Psoas muscle (tissue), 8 donors: ENCODE measurements at regions of chr2 and their contacts with region 1.

Region 1: GRCh38 chr2:239934571-239935171 is 90.5 kb downstream of the NDUFA10 start:
- DNase-seq: peak; percentile 62 to 77
- ATAC-seq: peak; percentile 86 to 92 (median 86)
- H3K4me3 ChIP-seq: no peak overlapping the region
- H3K27ac ChIP-seq: no peak overlapping the region
- H3K4me1 ChIP-seq: no peaks in the 10 kb centered on the region
- H3K27me3 ChIP-seq: no peaks in the 10 kb centered on the region
- CTCF ChIP-seq: peak; percentile 77

Region 2: GRCh38 chr2:239675826-239676715 is 258.6 kb before region 1 on chr2:
- intact Hi-C with region 1: no loop called
- DNase-seq: no peak
- ATAC-seq: no peak
- H3K4me3 ChIP-seq: no peak overlapping the region
- H3K27ac ChIP-seq: no peak overlapping the region
- H3K4me1 ChIP-seq: no peaks in the 10 kb centered on the region
- H3K27me3 ChIP-seq: no peaks in the 10 kb centered on the region
- CTCF ChIP-seq: no peak

Region 3: DNA sequence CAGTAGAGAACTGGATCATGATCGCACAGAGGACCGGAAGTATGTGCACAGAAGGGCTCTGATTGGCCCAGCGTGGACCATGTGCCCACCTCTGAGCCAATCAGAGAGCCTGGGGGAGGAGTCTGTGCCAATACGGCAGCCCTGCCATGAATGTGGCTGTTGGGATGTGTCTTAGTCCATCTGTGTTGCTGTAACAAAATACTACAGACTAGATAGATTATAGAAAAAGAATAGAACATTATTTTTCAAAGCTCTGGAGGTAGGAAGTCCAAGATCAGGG is 41.5 kb before region 1 on chr2:
- intact Hi-C with region 1: no loop called
- DNase-seq: no peak
- ATAC-seq: peak; percentile 34 to 71 (median 51)
- H3K4me3 ChIP-seq: no peak overlapping the region
- H3K27ac ChIP-seq: no peak overlapping the region
- H3K4me1 ChIP-seq: no peaks in the 10 kb centered on the region
- H3K27me3 ChIP-seq: peaks cover 0 to 1% (median 0%) of the 10 kb centered on the region in 3 donors
- CTCF ChIP-seq: no peak

Region 4: DNA sequence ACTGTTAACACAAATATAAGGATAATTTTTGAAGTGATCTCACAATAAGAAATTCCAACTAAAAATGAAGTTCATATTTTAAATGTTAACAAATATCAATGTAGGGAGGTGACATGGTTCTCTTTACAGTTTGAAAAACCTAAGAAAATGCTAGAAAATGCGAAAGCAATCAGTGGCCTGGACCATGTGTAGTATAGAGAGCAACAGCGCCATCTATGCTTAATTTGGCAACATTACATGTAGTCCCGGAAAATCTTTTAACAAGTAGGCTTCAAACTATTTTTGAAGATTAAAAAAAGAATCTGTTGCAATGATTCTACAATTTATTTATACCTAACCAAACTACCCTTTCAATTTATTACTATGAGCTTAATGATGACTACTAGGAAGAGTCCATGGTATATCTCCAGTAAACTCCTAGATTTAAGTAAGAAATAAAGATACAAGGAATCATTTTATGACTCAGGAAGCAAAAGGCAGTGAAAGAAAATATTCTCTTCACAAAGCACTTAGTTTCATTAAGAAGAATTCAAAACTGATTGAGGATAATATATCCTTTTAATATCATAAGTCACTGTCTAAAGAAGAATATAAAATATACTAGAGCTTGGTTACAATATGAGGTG is 57.1 kb after region 1 on chr2:
- intact Hi-C with region 1: loop called (anchors 1 to 2 kb)
- DNase-seq: no peak
- ATAC-seq: peak in 2 of 4 donors; percentile 70 to 73
- H3K4me3 ChIP-seq: no peak overlapping the region
- H3K27ac ChIP-seq: no peak overlapping the region
- H3K4me1 ChIP-seq: no peaks in the 10 kb centered on the region
- H3K27me3 ChIP-seq: no peaks in the 10 kb centered on the region
- CTCF ChIP-seq: peak; percentile 83

Region 5: DNA sequence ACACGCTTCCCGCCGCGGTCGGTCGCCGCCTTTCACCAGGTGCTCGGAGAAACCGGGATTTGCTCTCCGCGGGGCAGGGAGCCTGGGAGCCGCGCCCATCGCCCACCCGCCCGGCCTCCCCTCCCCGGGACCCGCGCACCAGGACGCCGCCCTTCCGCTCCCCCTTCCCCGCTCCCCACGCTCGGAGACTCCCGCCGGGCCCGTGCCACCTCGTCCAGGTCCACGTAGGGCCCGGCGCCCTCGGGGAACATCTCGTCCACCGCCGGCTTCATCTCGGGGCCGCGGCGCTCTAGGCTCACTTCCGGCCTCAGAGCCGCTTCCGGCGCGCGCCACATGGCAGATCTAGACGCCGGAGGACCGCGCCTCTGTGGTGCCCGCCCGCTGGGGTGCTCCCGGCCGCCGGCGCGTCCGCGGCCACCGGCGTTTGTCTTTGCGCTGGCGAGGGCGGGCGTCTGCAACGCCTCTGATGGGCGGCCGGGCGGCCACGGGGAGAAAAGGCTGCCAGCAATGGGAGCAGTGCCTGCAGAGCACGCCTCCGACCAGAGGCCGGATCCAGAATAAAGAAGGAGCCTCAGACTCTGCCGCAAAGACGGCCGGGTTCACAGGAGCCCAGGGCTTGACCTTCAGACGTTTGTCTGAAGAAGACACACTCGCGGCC is 201.5 kb after region 1 on chr2 and contains the start of gene COPS9:
- intact Hi-C with region 1: loop called (anchors 10 kb)
- DNase-seq: peak; percentile 92 to 96
- ATAC-seq: peak; percentile 97 to 99 (median 98)
- H3K4me3 ChIP-seq: peak within 1 kb of the TSS; percentile 99
- H3K27ac ChIP-seq: peak within 1 kb of the TSS; percentile 86
- H3K4me1 ChIP-seq: peaks cover 12% of the 10 kb centered on the region
- H3K27me3 ChIP-seq: no peaks in the 10 kb centered on the region
- CTCF ChIP-seq: no peak
- total RNA-seq, gene COPS9: 136 to 214 (median 158) TPM

Region 6: DNA sequence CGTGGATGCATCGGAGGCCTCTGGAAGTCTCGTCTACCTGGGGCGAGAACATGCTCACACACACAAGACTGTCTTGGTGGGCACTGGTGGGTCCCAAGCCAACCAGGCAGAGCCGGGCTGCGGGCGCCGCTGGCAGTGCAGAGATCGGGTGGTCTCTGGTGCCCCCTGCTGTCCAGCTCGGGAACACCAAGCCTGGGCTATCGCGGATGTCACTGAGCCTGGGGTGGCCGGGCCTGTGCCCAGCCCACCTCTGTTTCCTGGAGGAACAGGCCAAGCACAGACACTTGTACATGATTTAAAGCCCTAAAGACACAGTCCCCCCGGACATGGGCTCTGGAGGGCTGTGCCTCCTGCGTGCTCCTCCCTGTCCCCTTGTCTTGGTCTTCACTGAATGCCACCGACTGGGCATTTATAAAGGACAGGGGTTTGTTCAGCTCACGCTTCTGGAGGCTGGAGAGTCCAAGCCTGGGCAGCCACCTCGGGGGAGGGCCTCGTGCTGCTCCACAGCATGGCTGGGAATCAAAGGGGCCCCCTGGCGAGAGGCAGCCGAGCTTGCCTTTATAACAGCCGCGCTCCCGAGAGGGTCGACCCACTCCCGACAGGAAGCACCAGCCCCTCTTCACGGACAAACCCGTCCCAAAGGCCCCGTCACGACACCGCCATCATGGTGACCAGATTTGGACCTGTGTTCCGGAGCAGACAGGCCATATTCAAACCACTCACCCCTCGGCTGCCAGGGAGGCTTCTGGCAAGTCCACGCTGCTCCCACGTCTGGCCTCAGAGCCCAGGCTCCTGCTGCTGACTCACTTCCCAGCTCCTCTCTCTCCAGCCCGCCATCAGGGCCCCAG is 209.4 kb after region 1 on chr2:
- intact Hi-C with region 1: loop called (anchors 10 kb)
- DNase-seq: peak; percentile 68 to 87
- ATAC-seq: peak; percentile 88 to 96 (median 94)
- H3K4me3 ChIP-seq: no peak overlapping the region
- H3K27ac ChIP-seq: no peak overlapping the region
- H3K4me1 ChIP-seq: no peaks in the 10 kb centered on the region
- H3K27me3 ChIP-seq: no peaks in the 10 kb centered on the region
- CTCF ChIP-seq: peak; percentile 98

Region 7: DNA sequence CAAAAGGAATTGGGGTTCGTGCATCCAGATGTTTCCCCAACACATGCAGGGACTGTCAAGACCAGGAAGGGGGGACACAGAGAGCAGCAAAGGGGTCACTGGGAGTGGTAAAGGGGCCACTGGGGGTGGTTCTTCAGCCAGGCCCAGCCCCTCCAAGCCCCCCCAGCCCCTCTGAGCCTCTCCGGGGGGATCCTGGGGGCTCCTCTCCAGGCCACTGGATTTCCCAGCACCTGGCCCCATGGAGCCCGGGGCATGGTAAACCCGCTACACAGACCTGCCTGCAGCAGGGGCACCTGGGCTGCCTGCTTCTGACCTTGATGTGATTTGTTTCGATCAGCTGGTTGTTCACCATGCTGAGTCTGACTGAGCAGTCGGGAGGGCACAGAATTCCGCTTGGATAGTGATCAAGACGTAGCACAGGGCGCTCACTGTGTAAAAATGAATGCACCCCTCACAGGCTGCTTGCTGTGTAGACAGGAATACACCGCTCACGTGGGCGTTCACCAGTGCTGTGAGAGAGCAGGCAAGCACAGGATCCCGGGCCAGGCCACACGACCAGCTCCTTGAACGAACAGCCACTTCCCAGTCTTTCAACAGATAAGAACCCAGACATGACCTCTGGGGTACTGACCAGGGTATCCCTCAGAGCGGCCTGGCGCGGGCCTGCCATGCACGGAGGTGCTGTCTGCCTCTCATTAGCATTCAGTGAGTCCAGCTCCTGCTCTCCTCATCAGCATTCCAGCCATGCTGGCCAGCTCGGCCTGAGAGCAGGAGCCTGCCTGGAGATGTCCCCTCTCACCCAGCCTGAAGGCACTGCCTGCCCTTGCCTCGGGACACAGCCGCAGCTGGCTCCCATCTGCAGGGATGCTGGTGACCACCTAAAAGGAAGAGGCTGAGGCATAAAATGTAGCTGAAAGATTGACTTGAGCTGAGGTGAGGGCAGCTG is 279.1 kb after region 1 on chr2:
- intact Hi-C with region 1: no loop called
- DNase-seq: peak in 1 of 2 donors; percentile 45
- ATAC-seq: no peak
- H3K4me3 ChIP-seq: no peak overlapping the region
- H3K27ac ChIP-seq: no peak overlapping the region
- H3K4me1 ChIP-seq: no peaks in the 10 kb centered on the region
- H3K27me3 ChIP-seq: peaks cover 0 to 2% (median 0%) of the 10 kb centered on the region in 3 donors
- CTCF ChIP-seq: no peak

Region 8: GRCh38 chr2:240452457-240453256 is 518.0 kb after region 1 on chr2:
- intact Hi-C with region 1: no loop called
- DNase-seq: peak; percentile 73 to 88
- ATAC-seq: peak; percentile 55 to 79 (median 65)
- H3K4me3 ChIP-seq: peak overlapping the region; percentile 58
- H3K27ac ChIP-seq: no peak overlapping the region
- H3K4me1 ChIP-seq: peaks cover 45% of the 10 kb centered on the region
- H3K27me3 ChIP-seq: no peaks in the 10 kb centered on the region
- CTCF ChIP-seq: no peak